GM12878 (cell line): ENCODE measurements at regions of chr2 and their contacts with region 1.

Region 1: DNA sequence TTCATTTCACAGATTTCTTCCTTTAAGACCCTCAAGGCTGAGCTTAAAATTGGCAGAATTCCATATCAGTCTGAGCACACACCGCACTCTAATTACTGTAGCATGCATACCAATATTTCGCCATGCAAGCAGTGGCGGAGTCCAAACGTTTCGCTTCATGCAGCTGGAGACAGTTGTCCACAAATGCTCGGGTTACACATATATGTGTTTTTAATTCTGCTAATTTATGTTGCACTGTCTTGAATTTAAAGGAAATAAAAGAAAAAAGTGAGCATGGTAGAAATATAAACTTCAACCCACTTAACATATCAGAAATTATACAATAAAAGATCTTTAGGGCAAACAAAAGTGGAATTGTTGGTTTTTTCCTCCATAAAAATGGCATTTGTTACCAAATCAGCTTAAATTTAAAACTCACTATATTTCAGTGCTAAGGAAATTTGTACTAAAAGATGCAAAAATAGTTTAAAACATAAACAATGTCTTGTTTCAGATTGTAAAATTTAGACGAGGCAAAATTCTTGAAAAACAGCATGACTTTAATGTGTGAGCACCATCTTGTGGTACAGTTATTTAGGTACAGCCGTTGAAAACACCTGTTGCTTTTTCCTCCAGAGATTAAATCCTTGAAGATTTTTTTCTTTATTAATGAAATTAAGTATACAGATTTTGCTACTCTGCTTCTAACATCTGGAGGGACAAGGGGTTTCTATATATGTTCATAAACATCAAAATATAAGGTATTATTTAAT is 24.1 kb upstream of the KANSL1L start:
- DNase-seq: no peak
- ATAC-seq: peak; percentile 69
- H3K4me3 ChIP-seq: no peak overlapping the region
- H3K27ac ChIP-seq: no peak overlapping the region
- H3K4me1 ChIP-seq: no peaks in the 10 kb centered on the region
- H3K27me3 ChIP-seq: no peaks in the 10 kb centered on the region
- CTCF ChIP-seq: peak; percentile 52 to 77 (median 55)
- EP300 ChIP-seq: no peak
- POLR2A ChIP-seq: no peak
- RAD21 ChIP-seq: peak; percentile 89

Region 2: DNA sequence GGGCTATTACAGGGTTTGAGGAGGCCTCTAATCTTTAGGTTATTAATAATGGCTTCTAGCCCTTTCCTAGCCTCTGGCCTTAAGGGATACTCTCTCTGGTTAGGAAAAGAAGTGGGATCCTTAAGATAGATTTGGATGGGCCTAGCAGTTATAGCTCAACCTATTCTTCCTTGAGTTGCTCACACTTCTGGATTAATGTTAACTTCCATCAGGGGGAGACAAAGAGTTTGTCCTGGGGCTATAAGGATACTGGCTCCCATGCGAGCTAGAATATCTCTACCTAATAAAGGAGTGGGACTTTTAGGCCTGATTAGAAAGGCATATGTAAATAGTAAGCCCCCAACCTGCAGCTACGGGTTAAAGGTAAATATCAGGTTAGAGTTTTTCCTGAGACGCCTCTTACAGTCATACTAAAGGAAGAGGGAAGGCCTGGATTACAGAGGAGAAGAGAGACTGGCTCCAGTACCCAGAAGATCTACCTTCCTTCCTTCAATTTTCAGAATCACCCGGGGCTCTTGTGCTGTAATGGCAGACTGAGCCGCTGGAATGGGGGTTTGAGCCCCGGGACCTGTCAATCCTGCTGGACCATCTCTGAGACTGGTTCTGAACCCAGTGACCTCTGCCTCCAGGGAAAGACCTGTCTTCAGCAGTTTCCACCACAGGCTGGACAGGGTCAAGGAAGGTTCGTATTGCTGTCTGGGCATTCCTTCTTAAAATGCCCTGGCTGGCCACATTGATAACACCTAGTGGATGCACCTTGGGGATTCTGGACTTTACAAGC is 1802.8 kb before region 1 on chr2:
- CTCF ChIA-PET with region 1: no interaction called
- POLR2A ChIA-PET with region 1: no interaction called
- RAD21 ChIA-PET with region 1: no interaction called
- SMC1A ChIA-PET with region 1: no interaction called
- in situ Hi-C with region 1: loop called (anchors 25 kb)
- intact Hi-C with region 1: loop called (anchors 5 kb)
- DNase-seq: no peak
- ATAC-seq: no peak
- H3K4me3 ChIP-seq: no peak overlapping the region
- H3K27ac ChIP-seq: no peak overlapping the region
- H3K4me1 ChIP-seq: no peaks in the 10 kb centered on the region
- H3K27me3 ChIP-seq: no peaks in the 10 kb centered on the region
- CTCF ChIP-seq: no peak
- EP300 ChIP-seq: no peak
- POLR2A ChIP-seq: no peak
- RAD21 ChIP-seq: no peak

Region 3: DNA sequence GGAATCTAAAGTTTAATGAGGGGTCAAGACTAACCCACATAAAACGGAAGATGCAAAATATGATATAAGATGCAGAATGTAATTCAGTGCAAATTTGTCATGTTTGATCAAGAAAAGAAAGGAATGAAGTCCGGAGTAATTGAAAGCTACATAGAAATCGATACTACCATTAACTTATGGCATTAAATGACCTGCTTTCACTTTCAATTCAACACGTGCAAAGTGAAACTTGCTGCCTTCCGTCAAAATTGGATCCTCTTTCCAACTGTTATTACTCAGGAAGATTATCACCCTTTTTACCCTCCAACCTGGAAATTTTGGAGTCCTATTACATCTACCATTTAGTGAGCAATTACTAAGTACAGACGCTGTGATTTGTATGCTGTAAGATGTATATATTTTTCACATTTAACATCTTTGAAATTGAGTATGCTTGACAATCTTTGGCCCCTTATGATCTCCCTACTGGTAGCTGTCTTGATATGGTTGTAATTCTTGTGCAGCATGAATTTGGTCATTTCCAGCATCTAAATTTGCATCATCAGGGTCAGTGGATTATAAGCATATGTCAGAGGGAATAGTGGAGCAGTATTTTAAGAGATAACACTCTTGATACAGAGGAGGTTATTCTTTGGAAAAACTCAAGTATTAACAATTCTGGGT is 405.1 kb before region 1 on chr2:
- CTCF ChIA-PET with region 1: no interaction called
- POLR2A ChIA-PET with region 1: no interaction called
- RAD21 ChIA-PET with region 1: no interaction called
- SMC1A ChIA-PET with region 1: interaction called, 3 read pairs
- in situ Hi-C with region 1: no loop called
- intact Hi-C with region 1: loop called (anchors 10 kb)
- DNase-seq: no peak
- ATAC-seq: peak; percentile 57
- H3K4me3 ChIP-seq: 0 out of 2 replicates have a peak overlapping the region, but pooled peaks have one; percentile 8
- H3K27ac ChIP-seq: no peak overlapping the region
- H3K4me1 ChIP-seq: no peaks in the 10 kb centered on the region
- H3K27me3 ChIP-seq: no peaks in the 10 kb centered on the region
- CTCF ChIP-seq: no peak
- EP300 ChIP-seq: no peak
- POLR2A ChIP-seq: no peak
- RAD21 ChIP-seq: no peak

Region 4: GRCh38 chr2:209977386-209978239 is 217.7 kb before region 1 on chr2:
- CTCF ChIA-PET with region 1: interaction called, 51 read pairs
- POLR2A ChIA-PET with region 1: no interaction called
- RAD21 ChIA-PET with region 1: interaction called, 34 read pairs
- SMC1A ChIA-PET with region 1: interaction called, 38 read pairs
- in situ Hi-C with region 1: loop called (anchors 5 kb)
- intact Hi-C with region 1: loop called (anchors 1 kb)
- DNase-seq: peak; percentile 21
- ATAC-seq: peak; percentile 76
- H3K4me3 ChIP-seq: no peak overlapping the region
- H3K27ac ChIP-seq: no peak overlapping the region
- H3K4me1 ChIP-seq: no peaks in the 10 kb centered on the region
- H3K27me3 ChIP-seq: no peaks in the 10 kb centered on the region
- CTCF ChIP-seq: peak in 2 of 3 experiments; percentile 32 to 61; a peak in 2 of 6 replicates
- EP300 ChIP-seq: no peak
- POLR2A ChIP-seq: no peak
- RAD21 ChIP-seq: peak; percentile 77

Region 5: DNA sequence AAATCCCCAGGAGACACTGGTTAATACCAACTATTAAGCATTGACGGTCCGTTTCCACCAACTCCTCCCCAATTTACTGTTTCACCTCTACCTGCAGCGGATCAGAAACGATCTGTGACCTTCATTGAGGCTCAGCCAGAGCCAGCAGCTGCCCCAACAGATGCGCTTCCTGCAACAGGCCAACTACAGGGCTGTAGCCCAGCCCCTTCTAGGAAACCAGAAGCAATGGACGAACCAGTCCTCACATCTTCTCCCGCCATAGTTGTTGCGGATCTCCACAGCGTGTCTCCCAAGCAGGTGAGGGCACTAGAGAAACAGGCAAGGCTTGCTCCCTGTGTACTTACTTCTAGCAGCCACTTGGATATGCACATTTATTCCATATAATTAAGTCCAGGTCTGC is 201.3 kb before region 1 on chr2:
- CTCF ChIA-PET with region 1: interaction called, 11 read pairs
- POLR2A ChIA-PET with region 1: no interaction called
- RAD21 ChIA-PET with region 1: no interaction called
- SMC1A ChIA-PET with region 1: interaction called, 4 read pairs
- in situ Hi-C with region 1: no loop called
- intact Hi-C with region 1: no loop called
- DNase-seq: no peak
- ATAC-seq: no peak
- H3K4me3 ChIP-seq: no peak overlapping the region
- H3K27ac ChIP-seq: no peak overlapping the region
- H3K4me1 ChIP-seq: no peaks in the 10 kb centered on the region
- H3K27me3 ChIP-seq: peaks cover 0 to 2% of the 10 kb centered on the region in 2 experiments; a peak in 1 of 4 replicates
- CTCF ChIP-seq: no peak
- EP300 ChIP-seq: no peak
- POLR2A ChIP-seq: no peak
- RAD21 ChIP-seq: no peak